Activated naive CD8-positive, alpha-beta T cell treated with anti-CD3 and anti-CD28 coated beads, Interleukin-2, amount 10 ng/mL, durations not matched to agents 7 days and 5 days (primary cell): ENCODE measurements at regions of chr6 and their contacts with region 1.

Region 1: GRCh38 chr6:474453-475185 is 83.1 kb downstream of the IRF4 start:
- DNase-seq: peak; percentile 76
- ATAC-seq: peak; percentile 100
- H3K4me3 Mint-ChIP-seq: peak overlapping the region; percentile 72
- H3K27ac Mint-ChIP-seq: peak overlapping the region; percentile 95
- H3K4me1 Mint-ChIP-seq: peaks cover 60% of the 10 kb centered on the region
- H3K27me3 Mint-ChIP-seq: no peaks in the 10 kb centered on the region

Region 2: GRCh38 chr6:490251-491037 is 15.8 kb after region 1 on chr6:
- POLR2A ChIA-PET with region 1: interaction called, 35 read pairs
- DNase-seq: no peak
- ATAC-seq: peak; percentile 38
- H3K4me3 Mint-ChIP-seq: peak overlapping the region; percentile 67
- H3K27ac Mint-ChIP-seq: peak overlapping the region; percentile 91
- H3K4me1 Mint-ChIP-seq: peaks cover 68% of the 10 kb centered on the region
- H3K27me3 Mint-ChIP-seq: no peaks in the 10 kb centered on the region